ENCODE measurements at regions of chr12 and their contacts with region 1.

Region 1: GRCh38 chr12:47202176-47202575 is 122.4 kb upstream of the AMIGO2 start:
- DNase-seq: no peak
- ATAC-seq: no peak
- H3K4me3 ChIP-seq: no peak overlapping the region
- H3K4me3 Mint-ChIP-seq: no peak overlapping the region
- H3K27ac ChIP-seq: peak overlapping the region in 1 of 2 donors; percentile 40
- H3K27ac Mint-ChIP-seq: peak overlapping the region; percentile 68
- H3K4me1 ChIP-seq: peaks cover 37 to 45% of the 10 kb centered on the region in 2 donors
- H3K4me1 Mint-ChIP-seq: peaks cover 66% of the 10 kb centered on the region
- H3K27me3 ChIP-seq: no peaks in the 10 kb centered on the region
- H3K27me3 Mint-ChIP-seq: no peaks in the 10 kb centered on the region
- CTCF ChIP-seq: no peak

Region 2: DNA sequence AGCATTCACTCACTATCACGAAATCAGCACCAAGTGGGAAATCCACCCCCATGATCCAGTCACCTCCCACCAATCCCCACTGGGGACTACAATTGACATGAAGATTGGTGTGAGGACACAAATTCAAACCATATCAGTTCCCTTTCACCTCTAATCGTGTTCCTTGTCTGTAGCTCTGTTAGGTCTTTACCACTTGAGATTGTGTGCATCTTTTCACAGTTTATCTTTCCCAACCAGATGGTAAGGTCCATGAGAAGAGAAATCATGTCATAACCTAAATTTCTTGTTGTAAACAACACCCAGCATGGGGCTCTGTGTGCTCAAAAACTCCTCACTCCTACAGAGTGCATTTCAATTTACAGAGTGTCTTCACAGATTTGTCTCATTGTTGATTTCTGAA is 149.9 kb before region 1 on chr12:
- CTCF ChIA-PET with region 1: no interaction called
- POLR2A ChIA-PET with region 1: no interaction called
- intact Hi-C with region 1: no loop called
- DNase-seq: no peak
- ATAC-seq: no peak
- H3K4me3 ChIP-seq: no peak overlapping the region
- H3K4me3 Mint-ChIP-seq: no peak overlapping the region
- H3K27ac ChIP-seq: no peak overlapping the region
- H3K27ac Mint-ChIP-seq: no peak overlapping the region
- H3K4me1 ChIP-seq: peaks cover 0 to 8% of the 10 kb centered on the region in 2 donors
- H3K4me1 Mint-ChIP-seq: no peaks in the 10 kb centered on the region
- H3K27me3 ChIP-seq: peaks cover 0 to 3% (median 0%) of the 10 kb centered on the region in 4 experiments
- H3K27me3 Mint-ChIP-seq: no peaks in the 10 kb centered on the region
- CTCF ChIP-seq: no peak

Region 3: GRCh38 chr12:47184229-47184628 is 17.9 kb before region 1 on chr12:
- CTCF ChIA-PET with region 1: interaction called, 3 read pairs
- POLR2A ChIA-PET with region 1: interaction called, 11 read pairs
- intact Hi-C with region 1: no loop called
- DNase-seq: no peak
- ATAC-seq: no peak
- H3K4me3 ChIP-seq: no peak overlapping the region
- H3K4me3 Mint-ChIP-seq: no peak overlapping the region
- H3K27ac ChIP-seq: no peak overlapping the region
- H3K27ac Mint-ChIP-seq: no peak overlapping the region
- H3K4me1 ChIP-seq: peaks cover 10 to 12% of the 10 kb centered on the region in 2 donors
- H3K4me1 Mint-ChIP-seq: peaks cover 31% of the 10 kb centered on the region
- H3K27me3 ChIP-seq: no peaks in the 10 kb centered on the region
- H3K27me3 Mint-ChIP-seq: no peaks in the 10 kb centered on the region
- CTCF ChIP-seq: no peak

Measured in B cell (primary cell).